A549 (cell line): ENCODE measurements at regions of chr12 and their contacts with region 1.

Region 1: DNA sequence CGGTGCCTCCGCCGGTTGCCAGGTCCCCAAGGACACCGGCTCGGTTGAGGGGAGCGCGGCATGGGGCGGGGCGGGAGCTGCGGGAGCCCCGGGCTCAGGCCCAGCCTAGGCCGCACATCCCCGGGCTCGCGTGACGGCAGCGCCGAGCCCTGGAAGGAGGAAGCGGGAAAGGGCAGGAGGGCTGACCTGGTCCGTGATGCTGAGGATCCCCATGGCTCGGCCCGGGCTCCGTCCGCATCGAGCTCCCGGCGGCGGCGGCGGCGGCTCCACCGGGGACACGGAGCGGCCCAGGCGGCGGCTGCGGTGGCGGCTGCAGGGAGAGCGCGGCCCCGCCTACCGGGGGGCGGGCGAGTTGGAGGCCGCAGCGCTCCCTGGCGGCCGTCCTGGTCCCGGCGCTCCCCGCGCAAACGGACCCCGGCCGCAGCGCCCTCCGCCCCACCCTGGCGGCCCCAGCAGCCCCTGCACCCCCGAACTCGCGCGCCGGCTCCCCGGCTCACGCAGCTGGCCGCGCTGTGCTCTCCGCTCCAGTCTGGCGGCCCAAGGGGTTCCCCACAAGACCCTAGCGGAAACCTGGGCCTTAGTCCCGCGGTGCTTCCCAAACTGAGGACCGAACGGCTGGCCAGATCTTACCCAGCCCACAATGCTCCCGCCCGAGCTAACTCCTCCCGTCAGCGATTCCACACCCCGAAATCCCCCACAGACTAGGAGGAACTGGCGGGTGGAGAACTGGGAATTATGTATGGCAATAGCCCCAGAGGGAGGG is at the start of gene ANKRD52:
- DNase-seq: peak; percentile 80 to 88
- ATAC-seq: peak; percentile 86 to 89
- H3K4me3 ChIP-seq: peak within 1 kb of the TSS; percentile 94
- H3K27ac ChIP-seq: peak within 1 kb of the TSS; percentile 92 to 97
- H3K4me1 ChIP-seq: peaks cover 47% of the 10 kb centered on the region
- CTCF ChIP-seq: peak; percentile 87
- EP300 ChIP-seq: no peak
- POLR2A ChIP-seq: peak; percentile 65
- RAD21 ChIP-seq: 0 out of 5 replicates have a peak, but pooled peaks of 1 of the 2 experiments have one; percentile 39
- polyA plus RNA-seq, gene ANKRD52: 26.1 and 35.1 TPM in 2 replicates

Region 2: DNA sequence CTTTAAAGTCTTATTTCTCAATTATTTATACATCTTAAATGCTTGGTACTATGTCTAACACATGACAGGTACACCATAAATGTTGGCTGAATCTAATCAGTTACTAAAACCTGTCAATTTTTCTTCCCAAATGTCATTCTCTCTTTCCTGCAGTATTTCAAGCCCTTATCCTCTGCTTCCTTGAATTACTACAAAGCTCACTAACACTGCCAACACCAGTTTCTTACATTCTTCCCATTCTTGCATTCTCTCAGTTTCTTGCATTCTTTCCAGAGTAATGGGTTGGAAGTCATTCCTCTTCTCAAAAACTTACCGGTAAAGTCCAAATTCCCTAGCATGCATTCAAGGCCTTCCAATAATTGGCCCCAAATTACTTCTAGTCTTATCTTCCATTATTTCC is 59.4 kb before region 1 on chr12:
- CTCF ChIA-PET with region 1: interaction called, 10 read pairs
- POLR2A ChIA-PET with region 1: interaction called, 3 read pairs
- DNase-seq: no peak
- ATAC-seq: no peak
- H3K4me3 ChIP-seq: no peak overlapping the region
- H3K27ac ChIP-seq: no peak overlapping the region
- H3K4me1 ChIP-seq: no peaks in the 10 kb centered on the region
- CTCF ChIP-seq: no peak
- EP300 ChIP-seq: no peak
- POLR2A ChIP-seq: no peak
- RAD21 ChIP-seq: no peak

Region 3: DNA sequence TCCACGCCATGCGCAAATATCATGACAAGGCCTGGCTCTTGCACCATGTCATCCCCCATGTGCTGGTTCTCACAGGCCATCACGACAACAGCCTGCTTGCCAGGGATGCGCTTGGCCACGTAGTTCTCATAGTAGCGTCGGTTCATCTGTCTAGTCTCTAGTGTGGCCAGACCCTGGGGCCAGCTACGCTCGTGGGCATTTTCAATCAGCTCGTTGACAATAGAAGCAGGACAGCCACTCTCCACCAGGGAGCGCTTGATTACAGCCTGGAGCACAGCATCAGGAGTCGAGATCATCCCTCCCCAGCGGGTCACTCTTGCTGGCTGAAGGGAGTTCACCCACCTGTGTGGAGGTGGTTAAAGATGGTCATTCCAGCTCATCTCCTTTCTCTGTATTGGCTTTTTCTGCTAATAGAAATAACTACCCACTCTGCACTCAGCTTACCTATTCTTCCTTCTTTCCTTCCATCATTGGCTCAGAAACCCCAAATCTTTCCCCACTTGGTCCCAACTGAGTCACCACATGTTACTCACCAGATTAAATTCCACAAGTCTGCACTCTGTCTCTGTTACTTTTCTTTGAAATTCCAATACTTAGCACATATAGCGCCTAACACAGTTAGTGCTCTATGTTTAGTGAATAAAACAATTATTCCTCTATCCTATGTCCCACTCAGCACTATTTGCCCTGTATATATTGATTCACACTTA is 51.6 kb before region 1 on chr12:
- CTCF ChIA-PET with region 1: interaction called, 16 read pairs
- POLR2A ChIA-PET with region 1: no interaction called
- DNase-seq: peak; percentile 72 to 74
- ATAC-seq: peak; percentile 94 to 96
- H3K4me3 ChIP-seq: no peak overlapping the region
- H3K27ac ChIP-seq: no peak overlapping the region
- H3K4me1 ChIP-seq: no peaks in the 10 kb centered on the region
- CTCF ChIP-seq: peak; percentile 61
- EP300 ChIP-seq: no peak
- POLR2A ChIP-seq: no peak
- RAD21 ChIP-seq: peak; percentile 45 to 68; a peak in 4 of 5 replicates

Region 4: GRCh38 chr12:56230432-56231183 is 27.6 kb before region 1 on chr12:
- CTCF ChIA-PET with region 1: interaction called, 69 read pairs
- POLR2A ChIA-PET with region 1: no interaction called
- DNase-seq: no peak
- ATAC-seq: peak in 1 of 2 experiments; percentile 16; a peak in 2 of 6 replicates
- H3K4me3 ChIP-seq: no peak overlapping the region
- H3K27ac ChIP-seq: no peak overlapping the region
- H3K4me1 ChIP-seq: peaks cover 9% of the 10 kb centered on the region
- CTCF ChIP-seq: no peak
- EP300 ChIP-seq: no peak
- POLR2A ChIP-seq: no peak; the same call in 1 of the 2 replicates
- RAD21 ChIP-seq: no peak

Region 5: GRCh38 chr12:56243731-56244181 is 14.5 kb before region 1 on chr12:
- CTCF ChIA-PET with region 1: interaction called, 101 read pairs
- POLR2A ChIA-PET with region 1: no interaction called
- DNase-seq: no peak
- ATAC-seq: peak in 1 of 2 experiments; percentile 12; a peak in 3 of 6 replicates
- H3K4me3 ChIP-seq: no peak overlapping the region
- H3K27ac ChIP-seq: peak overlapping the region; percentile 13 to 59; a peak in 2 of 6 replicates
- H3K4me1 ChIP-seq: peaks cover 19% of the 10 kb centered on the region
- CTCF ChIP-seq: no peak
- EP300 ChIP-seq: no peak
- POLR2A ChIP-seq: no peak
- RAD21 ChIP-seq: no peak

Region 6: DNA sequence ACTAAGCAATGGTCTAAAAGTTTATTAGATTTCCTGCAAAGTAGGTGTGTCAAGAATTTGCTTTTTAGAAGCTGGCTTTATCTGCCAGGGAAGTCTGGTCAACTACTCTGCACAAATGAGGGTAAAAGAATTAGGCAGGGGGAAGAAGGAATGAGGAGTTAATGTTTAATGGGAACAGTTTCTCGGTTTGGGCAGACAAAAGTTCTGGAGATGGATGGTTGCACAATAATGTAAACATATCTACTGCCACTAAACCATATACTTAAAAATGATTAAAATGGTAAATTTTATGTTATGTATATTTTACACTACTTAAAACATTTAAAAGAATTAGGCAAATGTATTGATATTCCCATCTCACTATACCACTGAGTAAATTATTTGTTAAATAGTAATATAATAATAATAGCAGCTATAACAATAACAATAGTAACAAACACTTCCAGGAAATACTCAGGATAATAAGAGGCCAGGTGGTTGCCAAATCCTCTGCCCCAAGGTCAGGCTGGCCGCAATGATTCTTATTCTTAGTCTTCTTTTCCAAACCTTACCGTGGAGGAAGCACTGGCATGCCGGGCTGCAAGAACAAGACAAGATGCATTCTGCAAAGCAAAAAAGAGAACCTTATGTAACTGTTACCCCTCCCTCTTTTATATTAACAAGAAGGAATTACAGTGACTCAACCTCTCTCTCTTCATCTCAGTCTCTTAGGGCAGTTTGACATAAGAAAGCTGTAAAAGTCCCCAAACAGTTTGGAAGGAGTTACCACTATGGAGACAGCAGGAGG is 28.0 kb after region 1 on chr12:
- CTCF ChIA-PET with region 1: interaction called, 22 read pairs
- POLR2A ChIA-PET with region 1: interaction called, 13 read pairs
- DNase-seq: no peak
- ATAC-seq: peak; percentile 37 to 42; a peak in 5 of 6 replicates
- H3K4me3 ChIP-seq: 0 out of 3 replicates have a peak overlapping the region, but pooled peaks have one; percentile 1
- H3K27ac ChIP-seq: peak overlapping the region; percentile 48 to 70; a peak in 4 of 6 replicates
- H3K4me1 ChIP-seq: peaks cover 32% of the 10 kb centered on the region
- CTCF ChIP-seq: no peak
- EP300 ChIP-seq: no peak
- POLR2A ChIP-seq: no peak
- RAD21 ChIP-seq: no peak

Region 7: GRCh38 chr12:56408799-56409417 is 150.7 kb after region 1 on chr12:
- CTCF ChIA-PET with region 1: no interaction called
- POLR2A ChIA-PET with region 1: no interaction called
- DNase-seq: no peak
- ATAC-seq: no peak
- H3K4me3 ChIP-seq: no peak overlapping the region
- H3K27ac ChIP-seq: no peak overlapping the region
- H3K4me1 ChIP-seq: no peaks in the 10 kb centered on the region
- CTCF ChIP-seq: no peak
- EP300 ChIP-seq: no peak
- POLR2A ChIP-seq: no peak
- RAD21 ChIP-seq: no peak